GM12878 (cell line): ENCODE measurements at regions of chr9 and their contacts with region 1.

Region 1: GRCh38 chr9:70924895-70925547 is 196.4 kb downstream of the TRPM3 start:
- DNase-seq: no peak
- ATAC-seq: peak; percentile 89
- H3K4me3 ChIP-seq: no peak overlapping the region
- H3K27ac ChIP-seq: no peak overlapping the region
- H3K4me1 ChIP-seq: no peaks in the 10 kb centered on the region
- H3K27me3 ChIP-seq: no peaks in the 10 kb centered on the region
- CTCF ChIP-seq: peak; percentile 65 to 80 (median 72)
- EP300 ChIP-seq: no peak
- POLR2A ChIP-seq: no peak
- RAD21 ChIP-seq: peak; percentile 62

Region 2: GRCh38 chr9:71001780-71002386 is 76.9 kb after region 1 on chr9:
- CTCF ChIA-PET with region 1: interaction called, 5 read pairs
- POLR2A ChIA-PET with region 1: no interaction called
- RAD21 ChIA-PET with region 1: no interaction called
- SMC1A ChIA-PET with region 1: interaction called, 3 read pairs
- in situ Hi-C with region 1: no loop called
- intact Hi-C with region 1: loop called (anchors 1 kb)
- DNase-seq: no peak
- ATAC-seq: peak; percentile 74
- H3K4me3 ChIP-seq: no peak overlapping the region
- H3K27ac ChIP-seq: no peak overlapping the region
- H3K4me1 ChIP-seq: no peaks in the 10 kb centered on the region
- H3K27me3 ChIP-seq: no peaks in the 10 kb centered on the region
- CTCF ChIP-seq: peak; percentile 52 to 56 (median 54)
- EP300 ChIP-seq: no peak
- POLR2A ChIP-seq: no peak
- RAD21 ChIP-seq: peak; percentile 46

Region 3: DNA sequence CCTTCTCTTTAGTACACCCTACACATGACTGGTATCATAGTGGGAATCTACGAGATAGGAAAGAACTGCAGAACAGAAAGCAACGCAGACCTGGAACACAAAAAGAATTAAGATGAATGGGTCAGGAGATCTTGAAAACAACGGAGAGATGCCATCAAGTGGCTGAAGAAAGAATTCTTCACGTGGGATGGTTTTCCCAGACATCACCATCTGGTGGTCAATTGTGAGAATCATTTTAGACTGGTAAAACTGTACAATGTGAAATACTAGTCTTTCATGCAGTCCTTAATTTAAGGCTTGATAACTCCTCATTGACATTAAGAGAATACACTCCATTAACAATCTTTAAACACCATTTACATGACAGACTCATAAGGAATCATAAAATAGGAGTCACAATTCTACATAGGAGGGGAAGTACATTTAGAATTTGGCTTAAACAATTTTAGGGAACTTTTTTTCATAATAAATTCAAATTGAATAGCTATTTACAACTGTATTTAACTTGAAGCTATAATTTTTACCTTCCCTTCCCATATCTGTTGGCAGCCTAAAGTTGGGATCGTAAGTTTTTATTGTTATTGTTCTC is 324.8 kb after region 1 on chr9:
- CTCF ChIA-PET with region 1: interaction called, 3 read pairs
- POLR2A ChIA-PET with region 1: no interaction called
- RAD21 ChIA-PET with region 1: interaction called, 3 read pairs
- SMC1A ChIA-PET with region 1: interaction called, 3 read pairs
- in situ Hi-C with region 1: no loop called
- intact Hi-C with region 1: loop called (anchors 2 kb)
- DNase-seq: no peak
- ATAC-seq: peak; percentile 87
- H3K4me3 ChIP-seq: no peak overlapping the region
- H3K27ac ChIP-seq: no peak overlapping the region
- H3K4me1 ChIP-seq: no peaks in the 10 kb centered on the region
- H3K27me3 ChIP-seq: no peaks in the 10 kb centered on the region
- CTCF ChIP-seq: peak; percentile 46 to 71 (median 63); a peak in 5 of 6 replicates
- EP300 ChIP-seq: no peak
- POLR2A ChIP-seq: no peak
- RAD21 ChIP-seq: peak; percentile 49